ENCODE measurements at regions of chr2 and their contacts with region 1.

Region 1: DNA sequence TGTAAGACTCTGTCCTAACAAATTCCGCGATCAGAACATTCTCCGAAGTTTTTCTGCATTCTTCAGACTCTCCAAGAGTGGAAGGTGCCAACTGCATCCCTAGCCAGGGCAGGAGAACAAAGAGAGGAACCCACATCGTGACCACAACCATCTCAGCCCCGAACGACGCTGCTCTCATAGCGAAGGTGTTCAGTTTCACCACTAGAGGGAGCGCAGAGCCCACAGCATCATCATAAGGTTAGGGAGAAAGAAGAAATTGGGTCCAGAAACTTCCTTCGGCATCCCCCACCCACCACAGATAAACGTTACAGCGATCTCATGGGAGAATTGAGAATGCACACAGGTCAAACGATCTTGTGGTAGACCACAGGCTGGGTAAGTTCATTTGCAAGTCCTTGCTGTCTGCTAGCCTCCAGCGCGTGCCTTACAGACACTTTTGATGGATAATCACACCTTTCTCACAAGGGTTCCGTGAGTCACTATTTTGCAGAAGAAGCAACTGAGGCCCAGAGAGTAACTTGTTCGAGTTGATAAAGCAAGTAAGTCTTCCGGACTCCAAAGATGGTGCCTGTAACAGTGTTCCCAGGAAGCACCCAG is 53.7 kb upstream of the ARL4C start:
- DNase-seq: peak; percentile 63
- H3K4me3 Mint-ChIP-seq: no peak overlapping the region
- H3K27ac Mint-ChIP-seq: no peak overlapping the region
- H3K4me1 Mint-ChIP-seq: no peaks in the 10 kb centered on the region
- H3K27me3 Mint-ChIP-seq: peaks cover 38% of the 10 kb centered on the region
- CTCF ChIP-seq: peak; percentile 97

Region 2: DNA sequence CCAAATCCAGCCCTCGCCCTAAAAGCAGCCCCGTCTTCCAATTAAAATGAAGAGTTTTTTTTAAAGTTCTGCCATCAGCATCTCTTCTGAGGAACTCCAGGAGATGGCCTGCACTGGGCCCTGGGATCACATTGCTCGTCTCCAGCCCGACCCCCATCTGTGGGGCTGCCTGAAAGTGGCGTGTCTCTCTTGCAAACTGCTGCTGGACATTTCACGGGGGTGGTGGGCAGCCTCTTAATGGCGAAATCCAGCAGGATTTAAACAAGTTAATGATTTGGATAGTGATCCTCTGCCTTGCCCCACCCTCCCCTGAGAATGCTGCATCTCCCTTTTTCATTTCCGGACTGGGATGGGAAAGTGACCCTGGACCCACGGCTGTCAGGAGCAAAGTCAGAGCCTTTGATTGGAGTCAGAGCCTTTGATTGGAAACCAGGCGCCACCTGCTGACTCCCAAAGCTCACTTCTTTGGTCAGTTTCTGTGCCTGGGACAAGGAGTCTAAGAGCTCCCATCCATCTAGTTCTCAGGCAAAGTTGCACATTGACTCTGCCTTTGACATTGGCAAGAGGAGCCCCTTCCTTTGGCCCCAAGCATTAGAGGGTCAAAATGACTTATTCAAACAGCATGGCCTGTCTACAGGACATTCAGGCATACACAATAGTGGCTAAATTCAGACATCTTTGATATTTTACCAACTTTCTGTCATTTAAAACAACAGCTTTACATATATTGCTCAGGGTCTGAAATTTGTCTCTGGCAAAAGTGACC is 556.4 kb after region 1 on chr2:
- CTCF ChIA-PET with region 1: interaction called, 9 read pairs
- intact Hi-C with region 1: loop called (anchors 1 kb)
- DNase-seq: peak; percentile 68
- H3K4me3 Mint-ChIP-seq: no peak overlapping the region
- H3K27ac Mint-ChIP-seq: no peak overlapping the region
- H3K4me1 Mint-ChIP-seq: peaks cover 7% of the 10 kb centered on the region
- H3K27me3 Mint-ChIP-seq: peaks cover 21% of the 10 kb centered on the region
- CTCF ChIP-seq: peak; percentile 63

Region 3: DNA sequence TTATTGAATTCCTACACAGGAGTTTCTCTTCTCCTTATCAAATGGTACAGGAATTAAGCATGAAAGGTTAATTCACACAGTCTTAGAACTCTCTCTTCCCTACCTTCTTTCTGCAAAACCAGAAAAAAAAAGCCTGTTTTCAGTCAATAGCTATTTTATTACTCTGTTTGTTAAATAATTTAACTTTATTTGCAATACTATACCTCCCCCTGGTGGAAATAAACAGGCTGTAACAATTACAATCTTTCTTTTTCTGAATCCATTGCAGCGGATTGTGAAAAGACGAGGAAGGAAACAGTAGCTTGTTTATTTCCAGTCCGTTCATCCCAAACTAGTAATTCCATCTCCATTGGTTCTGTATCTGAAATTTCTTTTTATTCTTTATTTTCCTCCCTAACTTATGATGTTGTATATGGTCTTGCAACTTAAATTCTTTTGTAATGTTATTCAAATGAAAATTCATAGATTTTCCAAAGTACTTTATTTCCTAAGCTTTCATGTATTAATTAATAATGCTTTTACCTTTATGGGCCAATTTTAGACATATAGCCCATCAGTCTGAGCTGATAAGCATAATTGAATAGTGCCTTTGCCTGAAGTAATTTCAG is 566.4 kb after region 1 on chr2:
- CTCF ChIA-PET with region 1: interaction called, 9 read pairs
- intact Hi-C with region 1: loop called (anchors 1 kb)
- DNase-seq: no peak
- H3K4me3 Mint-ChIP-seq: no peak overlapping the region
- H3K27ac Mint-ChIP-seq: no peak overlapping the region
- H3K4me1 Mint-ChIP-seq: no peaks in the 10 kb centered on the region
- H3K27me3 Mint-ChIP-seq: peaks cover 46% of the 10 kb centered on the region
- CTCF ChIP-seq: peak; percentile 43